ENCODE measurements at regions of chr5 and their contacts with region 1.

Region 1: DNA sequence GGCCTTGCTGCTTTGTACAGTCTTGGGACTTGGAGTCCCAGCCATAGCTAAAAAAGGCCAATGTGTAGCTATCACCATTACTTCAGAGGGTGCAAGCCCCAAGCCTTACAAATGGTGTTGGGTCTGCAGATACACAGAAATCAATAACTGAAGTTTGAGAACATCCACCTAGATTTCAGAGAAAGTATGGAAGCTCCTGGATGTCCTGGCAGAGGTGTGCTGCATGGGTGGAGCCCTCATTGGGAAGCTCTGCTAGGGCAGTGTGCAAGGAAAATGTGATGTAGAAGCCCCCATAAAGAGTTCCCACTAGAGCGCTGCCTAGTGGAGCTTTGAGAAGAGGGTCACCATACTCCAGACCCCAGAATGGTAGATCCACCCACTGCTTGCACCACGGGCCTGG is 626.7 kb upstream of the COX7C start:
- DNase-seq: no peak
- ATAC-seq: no peak
- H3K4me3 ChIP-seq: no peak overlapping the region
- H3K27ac ChIP-seq: no peak overlapping the region
- H3K4me1 ChIP-seq: no peaks in the 10 kb centered on the region
- H3K27me3 ChIP-seq: no peaks in the 10 kb centered on the region
- CTCF ChIP-seq: no peak
- POLR2A ChIP-seq: no peak

Region 2: GRCh38 chr5:86008293-86008692 is 17.3 kb after region 1 on chr5:
- intact Hi-C with region 1: no loop called
- DNase-seq: no peak
- ATAC-seq: no peak
- H3K4me3 ChIP-seq: no peak overlapping the region
- H3K27ac ChIP-seq: no peak overlapping the region
- H3K4me1 ChIP-seq: no peaks in the 10 kb centered on the region
- H3K27me3 ChIP-seq: no peaks in the 10 kb centered on the region
- CTCF ChIP-seq: no peak
- POLR2A ChIP-seq: no peak

Region 3: DNA sequence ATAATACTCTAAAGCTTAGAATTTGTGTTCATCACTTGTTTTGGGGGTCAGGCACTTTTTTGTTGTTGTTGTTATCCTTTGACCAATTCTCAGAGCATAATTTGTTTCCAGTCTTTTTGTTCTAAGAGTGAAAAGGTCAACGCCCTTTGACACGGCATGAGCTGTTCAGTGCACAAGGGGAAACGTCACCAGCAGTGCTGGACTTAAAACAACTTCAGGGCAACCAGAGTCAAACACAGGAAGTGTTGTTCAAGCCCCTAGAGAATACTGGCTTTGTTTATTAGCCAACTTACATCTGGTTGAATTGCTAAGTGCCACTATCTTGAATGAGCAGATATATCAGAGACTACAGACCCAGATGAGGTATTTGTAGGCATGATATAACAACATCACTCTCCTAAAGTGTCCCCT is 1908.7 kb after region 1 on chr5:
- intact Hi-C with region 1: loop called in 1 of 10 experiments (anchors 10 kb)
- DNase-seq: peak in 4 of 5 donors; percentile 49 to 67 (median 60)
- ATAC-seq: peak; percentile 88 to 96 (median 94)
- H3K4me3 ChIP-seq: no peak overlapping the region
- H3K27ac ChIP-seq: peak overlapping the region in 10 of 12 donors; percentile 5 to 64 (median 44)
- H3K4me1 ChIP-seq: peaks cover 0 to 9% (median 3%) of the 10 kb centered on the region in 12 donors
- H3K27me3 ChIP-seq: no peaks in the 10 kb centered on the region
- CTCF ChIP-seq: no peak
- POLR2A ChIP-seq: no peak